ENCODE measurements at regions of chr2 and their contacts with region 1.

Region 1: GRCh38 chr2:219597552-219598307 is at the start of gene STK11IP:
- DNase-seq: peak; percentile 99
- H3K27ac ChIP-seq: peak within 1 kb of the TSS; percentile 89
- CTCF ChIP-seq: no peak

Region 2: DNA sequence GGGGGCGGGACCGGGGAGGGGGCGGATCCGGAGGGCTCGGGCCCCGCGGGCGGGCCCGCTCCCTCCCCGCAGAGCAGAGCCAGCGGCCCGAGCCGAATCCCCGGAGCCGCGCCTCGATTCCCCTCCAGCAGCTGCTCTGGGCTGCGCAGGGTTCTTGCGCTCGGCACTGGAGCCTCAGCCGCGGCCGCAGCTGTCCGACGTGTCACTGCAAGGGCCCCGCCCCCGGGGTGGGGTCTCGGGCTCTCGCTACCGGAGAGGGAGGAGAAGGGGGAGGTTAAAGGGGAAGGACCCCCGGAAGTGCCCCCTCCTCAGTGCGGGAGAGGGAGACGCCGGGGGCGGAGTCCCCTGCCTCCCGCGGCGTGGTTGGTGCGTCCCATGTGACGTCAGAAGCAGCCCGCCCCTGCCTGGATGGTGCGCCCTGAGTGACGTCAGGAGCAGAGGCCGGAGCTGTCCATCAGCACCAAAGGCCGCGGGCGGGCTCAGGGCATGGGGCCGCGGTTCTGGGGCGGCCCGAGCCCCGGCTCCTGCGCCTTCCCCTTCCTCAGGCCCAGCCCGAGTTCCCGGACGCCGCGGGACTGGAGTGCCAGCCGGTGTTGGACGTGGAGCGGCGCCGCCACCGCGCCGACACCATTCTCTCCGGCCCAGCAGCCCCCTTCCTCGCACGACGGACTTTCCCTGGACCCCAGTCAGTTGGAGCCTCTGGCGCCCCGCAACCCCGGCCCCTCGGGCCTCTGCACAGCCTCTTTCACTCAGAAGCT is 54.0 kb before region 1 on chr2 and contains the starts of genes CHPF and TMEM198:
- CTCF ChIA-PET with region 1: interaction called, 12 read pairs
- POLR2A ChIA-PET with region 1: no interaction called
- DNase-seq: peak; percentile 99
- H3K27ac ChIP-seq: peak within 1 kb of the TSS; percentile 94
- CTCF ChIP-seq: no peak

Measured in RWPE1 (cell line).